GM12878 (cell line): ENCODE measurements at regions of chr17 and their contacts with region 1.

Region 1: GRCh38 chr17:75393523-75394331 is 11.8 kb downstream of the GRB2 start:
- DNase-seq: peak; percentile 79
- ATAC-seq: peak; percentile 95
- H3K4me3 ChIP-seq: peak overlapping the region; percentile 77
- H3K27ac ChIP-seq: peak overlapping the region; percentile 57
- H3K4me1 ChIP-seq: peaks cover 21% of the 10 kb centered on the region
- H3K27me3 ChIP-seq: no peaks in the 10 kb centered on the region
- CTCF ChIP-seq: 0 out of 6 replicates have a peak, but pooled peaks of 1 of the 3 experiments have one; percentile 3
- EP300 ChIP-seq: no peak
- POLR2A ChIP-seq: peak; percentile 51; the same call in 1 of the 2 replicates
- RAD21 ChIP-seq: no peak

Region 2: GRCh38 chr17:74654742-74655141 is 739.0 kb before region 1 on chr17:
- CTCF ChIA-PET with region 1: no interaction called
- POLR2A ChIA-PET with region 1: no interaction called
- RAD21 ChIA-PET with region 1: no interaction called
- SMC1A ChIA-PET with region 1: no interaction called
- in situ Hi-C with region 1: no loop called
- intact Hi-C with region 1: no loop called
- DNase-seq: no peak
- ATAC-seq: no peak
- H3K4me3 ChIP-seq: no peak overlapping the region
- H3K27ac ChIP-seq: no peak overlapping the region
- H3K4me1 ChIP-seq: 0 out of 2 replicates have a peak, but pooled peaks cover 2% of the 10 kb centered on the region
- H3K27me3 ChIP-seq: peaks cover 3 to 11% of the 10 kb centered on the region in 2 experiments; a peak in 1 of 4 replicates
- CTCF ChIP-seq: no peak
- EP300 ChIP-seq: no peak
- POLR2A ChIP-seq: no peak
- RAD21 ChIP-seq: no peak

Region 3: DNA sequence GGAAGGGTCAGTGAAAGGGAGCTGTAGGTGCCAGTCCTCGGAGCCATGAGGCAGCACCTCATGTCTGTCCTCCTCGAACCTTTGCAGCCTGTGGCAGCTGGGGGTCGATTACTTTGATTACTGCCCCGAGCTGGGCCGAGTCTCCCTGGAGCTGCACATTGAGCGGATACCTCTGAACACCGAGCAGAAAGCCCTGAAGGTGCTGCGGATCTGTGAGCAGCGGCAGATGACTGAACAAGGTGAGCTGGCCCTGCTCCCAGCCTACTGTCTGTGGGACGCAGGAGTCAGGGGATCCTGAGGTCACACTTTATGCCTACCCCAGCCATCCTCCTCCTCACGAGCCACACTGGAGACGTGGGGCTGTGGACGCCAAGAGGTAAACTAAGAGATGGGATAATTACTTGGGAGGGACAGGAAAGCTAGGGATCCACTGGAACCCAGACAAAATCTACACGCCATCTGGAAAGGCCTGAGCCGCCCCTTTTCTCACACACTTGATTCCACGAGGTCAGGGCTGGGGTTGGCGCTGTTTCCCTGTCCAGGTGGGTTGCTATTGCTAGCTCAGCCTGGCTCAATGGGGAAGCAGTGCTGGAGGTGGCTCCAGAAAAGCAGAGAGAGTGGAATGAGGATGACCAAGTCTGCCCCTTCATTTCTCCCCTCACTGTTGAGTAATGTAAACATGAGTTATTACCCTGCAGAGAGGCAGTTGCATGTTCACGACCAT is 161.8 kb before region 1 on chr17:
- CTCF ChIA-PET with region 1: no interaction called
- POLR2A ChIA-PET with region 1: no interaction called
- RAD21 ChIA-PET with region 1: no interaction called
- SMC1A ChIA-PET with region 1: no interaction called
- in situ Hi-C with region 1: no loop called
- intact Hi-C with region 1: no loop called
- DNase-seq: no peak
- ATAC-seq: no peak
- H3K4me3 ChIP-seq: no peak overlapping the region
- H3K27ac ChIP-seq: no peak overlapping the region
- H3K4me1 ChIP-seq: no peaks in the 10 kb centered on the region
- H3K27me3 ChIP-seq: no peaks in the 10 kb centered on the region
- CTCF ChIP-seq: no peak
- EP300 ChIP-seq: no peak
- POLR2A ChIP-seq: peak; percentile 41; the same call in 1 of the 2 replicates
- RAD21 ChIP-seq: no peak

Region 4: DNA sequence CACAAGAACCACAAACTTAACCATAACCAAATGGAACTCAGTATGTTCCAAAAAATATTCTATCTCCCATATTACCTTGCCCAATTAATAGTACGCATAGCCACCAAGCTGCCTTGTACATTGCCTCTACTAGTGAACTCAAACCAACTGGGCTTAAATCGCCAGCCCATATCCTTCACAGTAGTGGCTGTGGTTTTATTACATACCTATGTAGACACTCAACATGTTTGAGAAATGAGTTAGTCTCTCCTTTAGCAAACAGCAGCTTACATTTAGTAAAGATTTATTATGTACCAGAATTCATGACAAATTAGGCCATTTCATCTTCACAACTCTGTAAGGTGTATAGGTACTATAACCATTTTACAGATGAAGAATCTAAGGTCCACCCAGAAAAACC is 29.6 kb before region 1 on chr17:
- CTCF ChIA-PET with region 1: interaction called, 6 read pairs
- POLR2A ChIA-PET with region 1: interaction called, 12 read pairs
- RAD21 ChIA-PET with region 1: interaction called, 6 read pairs
- SMC1A ChIA-PET with region 1: interaction called, 16 read pairs
- in situ Hi-C with region 1: no loop called
- intact Hi-C with region 1: no loop called
- DNase-seq: no peak
- ATAC-seq: no peak
- H3K4me3 ChIP-seq: no peak overlapping the region
- H3K27ac ChIP-seq: peak overlapping the region; percentile 54; the same call in 1 of the 2 replicates
- H3K4me1 ChIP-seq: peaks cover 64% of the 10 kb centered on the region
- H3K27me3 ChIP-seq: no peaks in the 10 kb centered on the region
- CTCF ChIP-seq: no peak
- EP300 ChIP-seq: no peak
- POLR2A ChIP-seq: no peak
- RAD21 ChIP-seq: no peak

Region 5: GRCh38 chr17:75371339-75371738 is 22.4 kb before region 1 on chr17:
- CTCF ChIA-PET with region 1: interaction called, 4 read pairs
- POLR2A ChIA-PET with region 1: interaction called, 12 read pairs
- RAD21 ChIA-PET with region 1: interaction called, 6 read pairs
- SMC1A ChIA-PET with region 1: interaction called, 101 read pairs
- in situ Hi-C with region 1: no loop called
- intact Hi-C with region 1: no loop called
- DNase-seq: no peak
- ATAC-seq: peak; percentile 51
- H3K4me3 ChIP-seq: no peak overlapping the region
- H3K27ac ChIP-seq: peak overlapping the region; percentile 27; the same call in 1 of the 2 replicates
- H3K4me1 ChIP-seq: peaks cover 24% of the 10 kb centered on the region
- H3K27me3 ChIP-seq: no peaks in the 10 kb centered on the region
- CTCF ChIP-seq: no peak
- EP300 ChIP-seq: no peak
- POLR2A ChIP-seq: no peak
- RAD21 ChIP-seq: no peak